ENCODE measurements at regions of chr20 and their contacts with region 1.

Region 1: DNA sequence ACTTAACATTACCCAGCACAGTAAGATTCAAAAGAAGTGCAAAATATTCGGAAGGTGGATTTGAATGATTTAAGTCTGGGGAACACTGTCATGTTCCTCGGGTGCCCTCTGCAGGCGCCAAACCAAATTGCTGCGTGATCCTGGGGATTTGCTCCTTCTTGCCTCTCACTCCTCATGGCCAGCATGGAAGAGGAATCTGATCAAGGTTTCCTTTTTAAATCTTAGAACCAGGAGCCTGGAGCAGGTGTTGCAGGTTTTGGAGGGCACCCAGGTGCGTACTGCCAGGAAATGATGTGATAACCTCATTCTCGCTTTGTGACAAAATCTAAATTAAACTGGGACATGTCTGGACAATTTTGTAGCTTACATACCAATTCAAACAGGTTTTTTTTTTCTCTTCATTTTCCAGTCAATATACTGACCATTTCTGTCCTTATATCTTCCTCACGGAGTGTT is 8.1 kb upstream of the PFDN4 start:
- DNase-seq: peak; percentile 56 to 87 (median 73)
- ATAC-seq: peak; percentile 91
- H3K4me3 ChIP-seq: no peak overlapping the region
- H3K27ac ChIP-seq: no peak overlapping the region
- H3K4me1 ChIP-seq: no peaks in the 10 kb centered on the region
- H3K27me3 ChIP-seq: no peaks in the 10 kb centered on the region
- CTCF ChIP-seq: peak; percentile 80 to 89

Region 2: GRCh38 chr20:54097236-54097529 is 102.6 kb before region 1 on chr20:
- intact Hi-C with region 1: loop called in 1 of 2 experiments (anchors 5 kb)
- DNase-seq: no peak
- ATAC-seq: no peak
- H3K4me3 ChIP-seq: no peak overlapping the region
- H3K27ac ChIP-seq: no peak overlapping the region
- H3K4me1 ChIP-seq: no peaks in the 10 kb centered on the region
- H3K27me3 ChIP-seq: peaks cover 0 to 10% of the 10 kb centered on the region in 2 donors
- CTCF ChIP-seq: no peak